BJ (cell line): ENCODE measurements at regions of chr14 and their contacts with region 1.

Region 1: DNA sequence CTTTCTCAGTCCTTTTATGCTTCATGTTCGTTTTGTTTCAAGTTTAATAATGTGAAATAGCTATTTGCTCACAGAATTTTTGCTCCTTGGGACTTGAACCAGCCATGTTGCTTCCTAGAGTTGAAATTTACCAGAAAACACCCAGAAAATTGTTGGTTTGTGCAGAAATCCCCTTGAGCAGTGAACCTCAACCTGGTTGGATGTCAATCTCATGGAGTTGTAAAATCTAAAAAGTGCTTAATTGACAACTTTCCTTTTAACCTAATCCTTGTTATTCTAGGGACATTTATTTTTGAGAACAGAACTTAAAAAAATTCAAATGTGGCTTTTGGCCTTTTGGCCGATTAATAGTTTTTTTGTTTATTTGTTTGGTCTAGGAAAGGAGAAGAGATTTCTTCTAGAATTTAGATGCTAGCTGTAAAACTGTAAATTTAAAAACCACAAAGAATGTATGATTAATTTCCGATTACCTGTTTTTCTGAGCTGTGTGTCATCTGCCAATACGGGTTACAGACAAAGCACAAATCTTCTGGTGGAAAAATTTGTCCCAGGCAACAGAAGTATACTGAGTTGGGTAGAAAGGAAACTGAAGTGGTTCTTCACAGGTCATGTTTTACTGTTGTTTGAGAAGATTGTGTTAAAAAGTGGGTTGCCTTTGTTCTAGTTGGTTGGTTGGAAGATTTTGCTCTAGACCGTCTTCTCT is 154.4 kb downstream of the FUT8 start:
- DNase-seq: no peak
- H3K4me3 ChIP-seq: no peak overlapping the region
- H3K27me3 ChIP-seq: no peaks in the 10 kb centered on the region
- CTCF ChIP-seq: no peak

Region 2: GRCh38 chr14:65239143-65239937 is 327.6 kb before region 1 on chr14:
- CTCF ChIA-PET with region 1: no interaction called
- POLR2A ChIA-PET with region 1: interaction called, 13 read pairs
- DNase-seq: peak; percentile 58
- H3K4me3 ChIP-seq: no peak overlapping the region
- H3K27me3 ChIP-seq: no peaks in the 10 kb centered on the region
- CTCF ChIP-seq: no peak

Region 3: GRCh38 chr14:65373679-65374039 is 193.3 kb before region 1 on chr14:
- CTCF ChIA-PET with region 1: no interaction called
- POLR2A ChIA-PET with region 1: no interaction called
- DNase-seq: no peak
- H3K4me3 ChIP-seq: no peak overlapping the region
- H3K27me3 ChIP-seq: no peaks in the 10 kb centered on the region
- CTCF ChIP-seq: no peak